Aorta (tissue), 5 donors: ENCODE measurements at regions of chr9 and their contacts with region 1.

Region 1: DNA sequence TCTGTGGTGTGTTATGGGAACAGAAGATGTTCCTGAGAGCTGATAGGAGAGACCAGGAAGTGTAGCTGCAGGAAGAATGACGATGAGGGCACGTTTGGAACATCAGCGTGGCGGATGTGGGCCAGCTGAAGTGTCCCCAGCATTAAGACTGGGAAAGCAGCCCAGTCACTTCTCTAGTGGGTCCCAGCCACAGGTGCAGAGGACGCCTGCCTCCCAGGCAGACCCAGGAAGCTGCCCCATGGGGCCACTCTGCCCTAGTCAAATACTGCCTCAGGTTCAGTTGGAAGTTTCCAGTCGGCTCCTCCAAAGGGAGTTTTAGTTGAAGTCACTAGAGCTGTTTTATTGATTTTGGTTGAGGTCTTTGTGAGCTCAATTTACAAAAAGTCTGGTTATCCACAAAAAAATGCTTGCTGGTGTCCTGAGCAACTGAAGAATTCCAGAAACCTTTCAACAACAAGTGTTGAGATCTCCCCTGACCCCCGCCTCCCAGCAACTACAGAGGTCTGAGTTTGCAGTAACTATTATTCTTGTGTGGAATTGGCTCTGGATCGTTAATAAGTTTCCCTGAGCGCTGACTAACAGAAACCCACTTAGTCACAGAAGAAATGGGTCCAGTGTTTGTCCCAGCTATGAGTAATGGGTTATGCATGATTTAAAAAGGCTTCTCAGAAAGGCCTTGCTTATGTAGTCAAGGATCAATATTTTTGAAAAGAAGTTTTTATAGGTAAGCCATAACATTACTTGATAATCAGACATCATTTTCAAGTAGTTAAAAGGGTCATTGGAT is 294.1 kb downstream of the FANCC start:
- DNase-seq: peak in 1 of 2 donors; percentile 68
- ATAC-seq: peak; percentile 14
- H3K4me3 ChIP-seq: peak overlapping the region in 1 of 2 donors; percentile 36
- H3K27ac ChIP-seq: peak overlapping the region; percentile 80 to 100
- H3K4me1 ChIP-seq: peaks cover 9 to 10% of the 10 kb centered on the region in 2 donors
- H3K27me3 ChIP-seq: no peaks in the 10 kb centered on the region

Region 2: GRCh38 chr9:95055851-95056551 is 32.6 kb after region 1 on chr9:
- intact Hi-C with region 1: loop called in 1 of 2 experiments (anchors 5 kb)
- DNase-seq: no peak
- ATAC-seq: peak; percentile 73
- H3K4me3 ChIP-seq: peak overlapping the region; percentile 48 to 60
- H3K27ac ChIP-seq: peak overlapping the region; percentile 84 to 99
- H3K4me1 ChIP-seq: peaks cover 0 to 11% of the 10 kb centered on the region in 2 donors
- H3K27me3 ChIP-seq: no peaks in the 10 kb centered on the region

Region 3: GRCh38 chr9:95268681-95269080 is 245.3 kb after region 1 on chr9:
- intact Hi-C with region 1: no loop called
- DNase-seq: no peak
- ATAC-seq: peak; percentile 68
- H3K4me3 ChIP-seq: no peak overlapping the region
- H3K27ac ChIP-seq: no peak overlapping the region
- H3K4me1 ChIP-seq: no peaks in the 10 kb centered on the region
- H3K27me3 ChIP-seq: no peaks in the 10 kb centered on the region